CD14-positive monocyte (primary cell): ENCODE measurements at regions of chr19 and their contacts with region 1.

Region 1: DNA sequence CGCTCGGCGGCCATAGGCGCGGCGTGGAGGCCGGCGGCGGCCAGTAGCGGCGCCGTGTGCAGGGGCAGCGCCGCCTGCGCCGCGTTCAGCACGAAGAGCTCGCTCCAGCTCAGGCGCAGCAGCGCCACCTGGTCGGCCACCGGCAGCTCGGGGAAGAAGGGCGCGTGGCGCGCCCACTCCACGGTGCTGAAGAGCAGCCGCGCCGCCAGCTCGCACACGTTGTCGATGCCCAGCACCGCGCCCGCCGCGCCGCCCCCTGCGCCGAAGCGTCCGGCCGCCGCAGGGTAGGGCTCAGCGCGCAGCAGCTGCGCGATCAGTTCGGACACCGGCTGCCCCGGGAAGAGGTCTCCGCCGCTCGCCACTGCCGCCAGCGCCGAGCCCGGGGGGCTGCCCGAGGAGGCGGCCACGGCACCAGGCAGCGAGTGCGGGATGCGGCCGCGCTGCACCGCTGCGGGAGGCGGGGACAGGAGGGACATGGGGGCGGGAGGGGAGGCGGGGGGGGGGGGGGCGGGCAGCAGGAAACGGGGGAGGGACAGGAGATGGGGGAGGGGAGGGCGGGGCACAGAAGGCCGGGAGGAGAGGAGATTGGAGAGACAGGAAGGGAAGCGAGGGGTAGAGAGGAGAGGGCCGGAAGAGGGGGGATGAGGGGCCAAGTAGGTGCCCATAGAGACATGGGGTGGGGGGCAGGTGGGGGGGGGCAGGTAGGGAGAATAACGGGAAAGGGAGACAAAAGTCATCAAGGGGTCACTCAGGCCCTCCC is 9.8 kb downstream of the OCEL1 start:
- DNase-seq: peak; percentile 71 to 77 (median 75)
- H3K4me3 ChIP-seq: peak overlapping the region; percentile 47 to 81 (median 55)
- H3K4me3 Mint-ChIP-seq: peak overlapping the region; percentile 74 to 79
- H3K27ac ChIP-seq: no peak overlapping the region
- H3K27ac Mint-ChIP-seq: no peak overlapping the region
- H3K4me1 ChIP-seq: peaks cover 14 to 24% of the 10 kb centered on the region in 2 donors
- H3K4me1 Mint-ChIP-seq: peaks cover 14% of the 10 kb centered on the region
- H3K27me3 ChIP-seq: no peaks in the 10 kb centered on the region
- H3K27me3 Mint-ChIP-seq: peaks cover 1 to 4% (median 1%) of the 10 kb centered on the region in 3 donors
- CTCF ChIP-seq: peak; percentile 55

Region 2: DNA sequence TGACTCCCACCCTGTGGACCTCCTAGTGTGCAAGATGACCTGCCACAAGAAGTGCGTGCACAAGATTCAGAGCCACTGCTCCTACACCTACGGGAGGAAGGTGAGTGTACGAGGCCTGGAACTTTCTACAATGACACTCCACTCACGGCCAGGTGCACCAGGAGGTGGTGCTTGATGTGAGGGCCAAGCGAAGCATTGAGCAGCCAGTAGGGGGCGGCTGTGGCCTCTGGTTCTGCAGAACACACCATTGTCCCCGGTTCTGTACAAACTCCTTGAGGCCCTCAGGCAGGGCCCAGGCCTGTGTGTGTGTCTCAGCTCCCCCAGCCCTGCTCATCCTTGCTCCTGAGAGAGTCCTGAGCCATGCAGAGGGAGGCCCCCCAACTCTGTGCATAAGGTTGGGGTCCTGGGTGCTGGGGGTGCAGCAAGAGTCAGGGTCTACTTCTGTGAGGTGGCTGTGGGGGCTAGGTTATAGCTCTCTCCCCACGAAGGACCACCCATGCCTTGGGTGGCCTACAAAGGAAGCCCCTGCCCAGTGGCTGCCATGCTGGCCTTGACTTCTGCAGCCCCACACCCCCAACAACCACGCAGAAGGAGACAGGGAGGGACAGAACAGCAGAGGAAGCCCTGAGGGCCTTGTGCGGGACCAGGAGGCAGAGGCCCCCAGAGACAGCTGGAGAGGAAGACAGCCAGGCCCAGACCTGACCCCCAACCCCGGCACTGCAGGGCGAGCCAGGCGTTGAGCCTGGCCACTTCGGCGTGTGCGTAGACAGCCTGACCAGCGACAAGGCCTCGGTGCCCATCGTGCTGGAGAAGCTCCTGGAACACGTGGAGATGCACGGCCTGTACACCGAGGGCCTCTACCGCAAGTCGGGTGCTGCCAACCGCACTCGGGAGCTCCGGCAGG is 30.3 kb before region 1 on chr19:
- intact Hi-C with region 1: loop called in 1 of 2 experiments (anchors 5 kb)
- DNase-seq: peak in 2 of 3 donors; percentile 30 to 46
- H3K4me3 ChIP-seq: no peak overlapping the region
- H3K4me3 Mint-ChIP-seq: no peak overlapping the region
- H3K27ac ChIP-seq: no peak overlapping the region
- H3K27ac Mint-ChIP-seq: peak overlapping the region in 1 of 7 donors; percentile 16
- H3K4me1 ChIP-seq: no peaks in the 10 kb centered on the region
- H3K4me1 Mint-ChIP-seq: peaks cover 2% of the 10 kb centered on the region
- H3K27me3 ChIP-seq: no peaks in the 10 kb centered on the region
- H3K27me3 Mint-ChIP-seq: peaks cover 0 to 4% (median 0%) of the 10 kb centered on the region in 3 donors
- CTCF ChIP-seq: peak; percentile 68

Region 3: GRCh38 chr19:17553256-17553655 is 317.5 kb after region 1 on chr19:
- intact Hi-C with region 1: no loop called
- DNase-seq: peak in 1 of 3 donors; percentile 32
- H3K4me3 ChIP-seq: no peak overlapping the region
- H3K4me3 Mint-ChIP-seq: peak overlapping the region in 1 of 2 donors; percentile 30
- H3K27ac ChIP-seq: no peak overlapping the region
- H3K27ac Mint-ChIP-seq: peak overlapping the region in 5 of 7 donors; percentile 15 to 72 (median 32)
- H3K4me1 ChIP-seq: peaks cover 33 to 37% of the 10 kb centered on the region in 2 donors
- H3K4me1 Mint-ChIP-seq: peaks cover 31% of the 10 kb centered on the region
- H3K27me3 ChIP-seq: no peaks in the 10 kb centered on the region
- H3K27me3 Mint-ChIP-seq: peaks cover 0 to 3% (median 0%) of the 10 kb centered on the region in 3 donors
- CTCF ChIP-seq: no peak